GM12878 (cell line): ENCODE measurements at regions of chrX and their contacts with region 1.

Region 1: GRCh38 chrX:9942086-9942485 is 25.1 kb upstream of the CLDN34 start:
- DNase-seq: peak; percentile 69
- ATAC-seq: peak; percentile 84
- H3K4me3 ChIP-seq: no peak overlapping the region
- H3K27ac ChIP-seq: peak overlapping the region; percentile 29; the same call in 1 of the 2 replicates
- H3K4me1 ChIP-seq: peaks cover 3% of the 10 kb centered on the region; the same call in 1 of the 2 replicates
- H3K27me3 ChIP-seq: no peaks in the 10 kb centered on the region
- CTCF ChIP-seq: no peak
- EP300 ChIP-seq: peak; percentile 76 to 84; a peak in 3 of 4 replicates
- POLR2A ChIP-seq: no peak
- RAD21 ChIP-seq: no peak

Region 2: DNA sequence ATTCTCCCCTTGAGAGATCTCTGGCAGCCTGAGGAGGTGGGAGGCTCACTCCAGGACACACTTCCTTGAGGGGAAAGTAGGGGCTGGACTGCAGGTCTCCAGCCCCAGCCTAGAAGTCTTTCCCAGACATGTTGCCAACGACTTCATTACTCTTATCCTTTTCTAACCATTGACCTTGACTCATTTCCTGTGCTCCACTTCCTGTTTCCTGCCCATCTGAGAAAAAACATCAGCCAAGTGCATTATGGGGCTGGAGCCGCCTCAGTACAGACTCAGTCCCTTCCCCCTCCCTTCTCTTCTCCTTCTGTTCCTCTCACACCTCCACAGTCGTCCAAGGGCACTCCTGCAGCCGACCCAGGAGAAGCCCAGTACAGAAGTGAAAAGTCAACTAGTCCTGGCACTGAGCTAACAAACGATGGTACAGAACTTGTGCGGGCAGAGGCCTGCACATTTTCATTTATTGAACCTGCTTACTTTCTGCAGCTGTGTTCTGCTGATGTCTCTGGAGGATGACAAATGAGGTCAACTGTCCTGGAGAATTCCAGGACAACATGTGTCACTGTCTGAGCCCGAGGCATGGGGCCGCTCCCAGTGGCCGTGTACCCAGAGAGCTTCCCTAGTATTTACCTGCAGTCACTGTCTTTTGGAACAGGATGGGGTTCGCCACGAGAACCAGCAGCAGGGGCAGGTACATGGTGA is 196.5 kb before region 1 on chrX:
- CTCF ChIA-PET with region 1: no interaction called
- POLR2A ChIA-PET with region 1: no interaction called
- RAD21 ChIA-PET with region 1: no interaction called
- SMC1A ChIA-PET with region 1: no interaction called
- in situ Hi-C with region 1: no loop called
- intact Hi-C with region 1: loop called (anchors 10 kb)
- DNase-seq: no peak
- ATAC-seq: no peak
- H3K4me3 ChIP-seq: no peak overlapping the region
- H3K27ac ChIP-seq: no peak overlapping the region
- H3K4me1 ChIP-seq: no peaks in the 10 kb centered on the region
- H3K27me3 ChIP-seq: no peaks in the 10 kb centered on the region
- CTCF ChIP-seq: no peak
- EP300 ChIP-seq: no peak
- POLR2A ChIP-seq: no peak
- RAD21 ChIP-seq: no peak

Region 3: GRCh38 chrX:9899640-9900111 is 42.4 kb before region 1 on chrX:
- CTCF ChIA-PET with region 1: no interaction called
- POLR2A ChIA-PET with region 1: no interaction called
- RAD21 ChIA-PET with region 1: interaction called, 6 read pairs
- SMC1A ChIA-PET with region 1: interaction called, 5 read pairs
- in situ Hi-C with region 1: no loop called
- intact Hi-C with region 1: loop called (anchors 2 kb)
- DNase-seq: no peak
- ATAC-seq: peak; percentile 82
- H3K4me3 ChIP-seq: no peak overlapping the region
- H3K27ac ChIP-seq: no peak overlapping the region
- H3K4me1 ChIP-seq: no peaks in the 10 kb centered on the region
- H3K27me3 ChIP-seq: no peaks in the 10 kb centered on the region
- CTCF ChIP-seq: no peak
- EP300 ChIP-seq: peak; percentile 48 to 71; a peak in 3 of 4 replicates
- POLR2A ChIP-seq: no peak
- RAD21 ChIP-seq: no peak

Region 4: GRCh38 chrX:9988762-9989161 is 46.7 kb after region 1 on chrX:
- CTCF ChIA-PET with region 1: no interaction called
- POLR2A ChIA-PET with region 1: no interaction called
- RAD21 ChIA-PET with region 1: no interaction called
- SMC1A ChIA-PET with region 1: no interaction called
- in situ Hi-C with region 1: no loop called
- intact Hi-C with region 1: loop called (anchors 5 kb)
- DNase-seq: no peak
- ATAC-seq: peak; percentile 52
- H3K4me3 ChIP-seq: no peak overlapping the region
- H3K27ac ChIP-seq: no peak overlapping the region
- H3K4me1 ChIP-seq: no peaks in the 10 kb centered on the region
- H3K27me3 ChIP-seq: no peaks in the 10 kb centered on the region
- CTCF ChIP-seq: peak; percentile 43 to 71 (median 44); a peak in 4 of 6 replicates
- EP300 ChIP-seq: no peak
- POLR2A ChIP-seq: no peak
- RAD21 ChIP-seq: peak; percentile 69